PC-9 (cell line): ENCODE measurements at regions of chr15 and their contacts with region 1.

Region 1: GRCh38 chr15:52379395-52380106 is 83.9 kb upstream of the MYO5C start:
- DNase-seq: no peak
- H3K4me3 ChIP-seq: no peak overlapping the region
- H3K27ac ChIP-seq: no peak overlapping the region
- H3K4me1 ChIP-seq: no peaks in the 10 kb centered on the region
- H3K27me3 ChIP-seq: no peaks in the 10 kb centered on the region
- CTCF ChIP-seq: no peak

Region 2: DNA sequence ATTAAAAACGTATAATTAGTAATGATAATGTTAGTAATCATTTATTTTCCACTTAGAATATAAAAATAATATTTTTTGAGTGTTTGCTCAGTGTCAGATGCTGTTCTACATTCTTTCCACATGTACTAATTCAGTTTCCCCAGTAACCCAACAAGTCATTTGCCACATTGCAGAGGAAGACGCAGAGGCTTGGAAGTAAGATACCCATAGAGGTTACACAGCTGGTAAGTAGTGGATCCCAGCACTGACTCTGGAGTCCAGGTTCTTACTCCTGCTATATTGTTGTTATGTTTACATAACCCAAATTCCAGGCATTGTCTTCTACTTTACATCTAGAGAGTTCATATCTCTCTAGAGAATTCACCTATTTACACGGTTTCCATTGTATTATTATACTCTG is 35.7 kb before region 1 on chr15:
- CTCF ChIA-PET with region 1: no interaction called
- POLR2A ChIA-PET with region 1: interaction called, 10 read pairs
- intact Hi-C with region 1: no loop called
- DNase-seq: no peak
- H3K4me3 ChIP-seq: no peak overlapping the region
- H3K27ac ChIP-seq: no peak overlapping the region
- H3K4me1 ChIP-seq: no peaks in the 10 kb centered on the region
- H3K27me3 ChIP-seq: no peaks in the 10 kb centered on the region
- CTCF ChIP-seq: no peak